T-cell (primary cell): ENCODE measurements at regions of chr20 and their contacts with region 1.

Region 1: GRCh38 chr20:56358596-56359211 is at the start of gene FAM210B:
- DNase-seq: peak; percentile 57 to 91 (median 72)
- ATAC-seq: peak; percentile 99 to 100 (median 99)
- H3K4me3 ChIP-seq: peak within 1 kb of the TSS; percentile 75 to 82
- H3K4me3 Mint-ChIP-seq: peak within 1 kb of the TSS; percentile 87 to 89 (median 89)
- H3K27ac ChIP-seq: no peak within 1 kb of the TSS
- H3K27ac Mint-ChIP-seq: peak within 1 kb of the TSS; percentile 66 to 89
- H3K4me1 ChIP-seq: peaks cover 0 to 19% of the 10 kb centered on the region in 2 experiments
- H3K4me1 Mint-ChIP-seq: peaks cover 14 to 28% (median 24%) of the 10 kb centered on the region in 3 donors
- H3K27me3 ChIP-seq: no peaks in the 10 kb centered on the region
- H3K27me3 Mint-ChIP-seq: no peaks in the 10 kb centered on the region
- total RNA-seq, gene FAM210B: 17.2 to 23.9 (median 20.4) TPM

Region 2: GRCh38 chr20:56392282-56393137 is 33.8 kb after region 1 on chr20 and contains the start of gene CSTF1:
- CTCF ChIA-PET with region 1: interaction called in 1 of 2 experiments, 14 read pairs
- POLR2A ChIA-PET with region 1: interaction called in 1 of 2 experiments, 3 read pairs
- DNase-seq: peak; percentile 98 to 100 (median 99)
- ATAC-seq: peak; percentile 87 to 91 (median 90)
- H3K4me3 ChIP-seq: peak within 1 kb of the TSS; percentile 66 to 97
- H3K4me3 Mint-ChIP-seq: no peak within 1 kb of the TSS
- H3K27ac ChIP-seq: peak within 1 kb of the TSS; percentile 89
- H3K27ac Mint-ChIP-seq: no peak within 1 kb of the TSS
- H3K4me1 ChIP-seq: peaks cover 14 to 20% of the 10 kb centered on the region in 2 experiments
- H3K4me1 Mint-ChIP-seq: peaks cover 19 to 28% (median 27%) of the 10 kb centered on the region in 3 donors
- H3K27me3 ChIP-seq: no peaks in the 10 kb centered on the region
- H3K27me3 Mint-ChIP-seq: no peaks in the 10 kb centered on the region
- total RNA-seq, gene CSTF1: 17.3 to 47.7 (median 41.9) TPM